Activated CD4-positive, alpha-beta T cell treated with anti-CD3 and anti-CD28 coated beads for 36 hours (primary cell): ENCODE measurements at regions of chr16 and their contacts with region 1.

Region 1: GRCh38 chr16:88194397-88195268 is 188.1 kb upstream of the ZNF469 start:
- DNase-seq: no peak
- ATAC-seq: no peak
- H3K4me3 Mint-ChIP-seq: no peak overlapping the region
- H3K27ac Mint-ChIP-seq: no peak overlapping the region
- H3K4me1 Mint-ChIP-seq: no peaks in the 10 kb centered on the region
- H3K27me3 Mint-ChIP-seq: no peaks in the 10 kb centered on the region

Region 2: DNA sequence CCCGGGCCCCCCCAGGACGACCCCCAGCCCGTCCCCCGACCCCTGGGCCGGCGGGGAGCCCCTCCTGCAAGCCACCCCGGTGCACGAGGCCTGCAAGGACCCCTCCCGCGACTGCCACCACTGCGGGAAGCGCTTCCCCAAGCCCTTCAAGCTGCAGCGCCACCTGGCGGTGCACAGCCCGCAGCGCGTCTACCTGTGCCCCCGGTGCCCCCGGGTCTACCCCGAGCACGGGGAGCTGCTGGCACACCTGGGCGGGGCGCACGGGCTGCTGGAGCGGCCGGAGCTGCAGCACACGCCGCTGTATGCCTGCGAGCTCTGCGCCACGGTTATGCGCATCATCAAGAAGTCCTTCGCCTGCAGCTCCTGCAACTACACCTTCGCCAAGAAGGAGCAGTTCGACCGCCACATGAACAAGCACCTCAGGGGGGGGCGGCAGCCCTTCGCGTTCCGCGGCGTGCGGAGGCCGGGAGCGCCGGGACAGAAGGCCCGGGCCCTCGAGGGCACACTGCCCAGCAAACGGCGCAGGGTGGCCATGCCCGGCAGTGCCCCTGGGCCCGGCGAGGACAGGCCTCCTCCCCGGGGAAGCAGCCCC is 242.8 kb after region 1 on chr16:
- CTCF ChIA-PET with region 1: interaction called, 4 read pairs
- POLR2A ChIA-PET with region 1: interaction called, 3 read pairs
- intact Hi-C with region 1: loop called (anchors 2 to 10 kb)
- DNase-seq: peak; percentile 83
- ATAC-seq: peak; percentile 81
- H3K4me3 Mint-ChIP-seq: no peak overlapping the region
- H3K27ac Mint-ChIP-seq: no peak overlapping the region
- H3K4me1 Mint-ChIP-seq: no peaks in the 10 kb centered on the region
- H3K27me3 Mint-ChIP-seq: no peaks in the 10 kb centered on the region